Breast epithelium (tissue), 4 donors: ENCODE measurements at regions of chr2 and their contacts with region 1.

Region 1: GRCh38 chr2:74290466-74291217 is 52.6 kb downstream of the SLC4A5 start:
- DNase-seq: no peak
- H3K4me3 ChIP-seq: no peak overlapping the region
- H3K27ac ChIP-seq: no peak overlapping the region
- H3K4me1 ChIP-seq: no peaks in the 10 kb centered on the region
- H3K27me3 ChIP-seq: no peaks in the 10 kb centered on the region
- CTCF ChIP-seq: no peak
- POLR2A ChIP-seq: no peak

Region 2: GRCh38 chr2:73730810-73731209 is 559.8 kb before region 1 on chr2:
- intact Hi-C with region 1: no loop called
- DNase-seq: no peak
- H3K4me3 ChIP-seq: no peak overlapping the region
- H3K27ac ChIP-seq: peak overlapping the region; percentile 6 to 32
- H3K4me1 ChIP-seq: peaks cover 0 to 1% of the 10 kb centered on the region in 2 donors
- H3K27me3 ChIP-seq: no peaks in the 10 kb centered on the region
- CTCF ChIP-seq: no peak
- POLR2A ChIP-seq: no peak

Region 3: DNA sequence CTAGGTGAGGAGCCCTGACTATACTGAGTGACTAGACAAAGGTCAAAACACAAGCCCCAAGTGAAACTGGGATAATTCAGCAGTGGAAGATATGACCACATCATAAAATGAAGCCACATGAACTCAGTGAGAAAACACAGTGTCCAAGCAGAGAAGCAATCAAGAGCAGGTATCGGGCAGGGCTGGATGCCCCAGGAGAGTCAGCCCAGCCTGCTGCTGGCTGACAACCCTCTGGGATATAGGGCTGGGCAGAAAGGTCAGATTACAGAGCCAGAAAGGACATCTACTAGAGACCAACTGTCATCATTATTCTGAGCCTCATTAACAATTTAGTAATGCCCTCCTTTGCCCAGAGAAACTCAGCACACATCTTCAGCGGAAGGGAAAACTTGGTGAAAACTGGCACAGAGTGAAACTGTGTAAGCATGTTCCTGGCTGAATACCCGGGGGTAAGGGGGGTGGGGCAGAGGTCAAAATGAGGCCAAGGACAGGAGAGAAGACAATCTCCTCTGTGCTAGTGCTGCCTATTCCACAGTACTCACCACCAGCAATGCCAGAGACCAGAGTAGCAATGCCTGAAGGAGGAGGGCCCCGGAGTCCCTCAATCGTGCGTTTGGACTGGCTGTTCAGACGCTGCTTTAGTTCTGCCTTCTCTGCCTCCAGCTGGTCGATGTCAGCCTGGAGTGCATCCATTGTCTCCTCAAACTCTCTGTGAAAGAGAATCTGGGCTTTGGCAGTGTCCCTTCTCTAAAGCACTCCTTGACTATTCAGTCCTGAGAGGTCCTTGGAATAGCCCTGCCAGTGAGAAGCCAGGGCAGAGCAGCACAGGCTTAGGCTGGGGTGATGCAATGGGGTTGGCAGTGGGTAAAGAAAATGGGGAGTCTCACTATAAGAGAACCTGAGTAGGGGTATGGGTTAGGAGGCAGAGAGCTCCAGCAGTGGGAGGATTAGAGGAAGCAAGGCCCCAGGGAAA is 74.2 kb after region 1 on chr2:
- intact Hi-C with region 1: no loop called
- DNase-seq: no peak
- H3K4me3 ChIP-seq: no peak overlapping the region
- H3K27ac ChIP-seq: no peak overlapping the region
- H3K4me1 ChIP-seq: no peaks in the 10 kb centered on the region
- H3K27me3 ChIP-seq: no peaks in the 10 kb centered on the region
- CTCF ChIP-seq: no peak
- POLR2A ChIP-seq: no peak

Region 4: DNA sequence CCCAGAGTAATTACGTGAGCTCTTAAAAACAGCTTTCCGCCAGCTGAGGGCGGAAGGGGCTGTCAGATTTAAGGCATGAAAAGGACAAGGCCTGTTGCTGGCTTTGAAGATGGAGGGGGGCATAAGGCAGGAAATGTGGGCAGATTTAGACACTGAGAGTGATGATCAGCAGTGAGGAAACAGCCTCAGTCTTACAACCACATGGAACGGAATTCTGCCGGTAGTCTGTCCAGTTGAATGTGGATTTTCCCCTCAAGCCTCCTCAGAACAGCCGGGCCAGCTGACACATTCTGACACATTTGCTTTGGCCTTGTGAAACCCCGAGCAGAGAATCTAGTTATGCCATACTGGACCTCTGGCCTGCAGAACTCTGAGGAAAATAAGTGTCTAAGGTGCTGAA is 684.4 kb after region 1 on chr2:
- intact Hi-C with region 1: no loop called
- DNase-seq: no peak
- H3K4me3 ChIP-seq: no peak overlapping the region
- H3K27ac ChIP-seq: no peak overlapping the region
- H3K4me1 ChIP-seq: no peaks in the 10 kb centered on the region
- H3K27me3 ChIP-seq: no peaks in the 10 kb centered on the region
- CTCF ChIP-seq: no peak
- POLR2A ChIP-seq: no peak

Region 5: DNA sequence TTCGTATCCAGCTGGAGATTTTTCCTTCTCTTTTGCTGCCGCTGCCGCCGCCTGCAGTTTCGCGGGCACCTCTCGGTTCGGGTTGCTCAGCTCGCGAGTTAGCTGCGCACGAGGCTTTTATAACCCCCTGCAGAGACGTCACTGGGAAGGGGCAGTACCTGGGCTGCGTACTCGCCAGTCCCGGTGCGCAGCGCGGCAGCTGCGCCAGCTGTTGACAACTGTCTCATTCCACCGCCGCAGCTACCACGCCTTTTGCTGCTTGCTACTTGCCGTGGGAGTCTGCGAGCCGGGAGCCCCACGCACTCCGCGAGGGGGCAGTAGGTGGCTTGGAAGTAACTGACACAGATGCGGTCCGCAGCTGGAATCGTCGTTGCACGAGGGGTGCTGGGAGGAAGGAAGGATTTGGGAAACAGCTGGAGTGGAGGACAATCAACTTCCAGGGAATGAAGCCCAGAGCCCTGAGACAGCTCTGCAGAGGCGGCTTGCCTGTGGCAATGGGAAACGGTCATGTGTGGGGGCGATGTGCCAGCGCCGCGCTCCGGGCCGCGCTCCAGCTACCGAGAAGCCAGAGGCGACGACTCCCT is 908.9 kb after region 1 on chr2 and contains the start of gene TACR1:
- intact Hi-C with region 1: loop called (anchors 10 kb)
- DNase-seq: peak; percentile 46 to 58
- H3K4me3 ChIP-seq: peak within 1 kb of the TSS; percentile 27 to 65 (median 48)
- H3K27ac ChIP-seq: peak within 1 kb of the TSS in 1 of 2 donors; percentile 27
- H3K4me1 ChIP-seq: peaks cover 4 to 6% of the 10 kb centered on the region in 2 donors
- H3K27me3 ChIP-seq: peaks cover 0 to 34% of the 10 kb centered on the region in 2 donors
- CTCF ChIP-seq: peak in 2 of 3 donors; percentile 13 to 32
- POLR2A ChIP-seq: no peak
- total RNA-seq, gene TACR1: 1.3 to 5.9 (median 2.4) TPM